Activated CD4-positive, alpha-beta T cell treated with anti-CD3 and anti-CD28 coated beads for 36 hours (primary cell): ENCODE measurements at regions of chr22 and their contacts with region 1.

Region 1: DNA sequence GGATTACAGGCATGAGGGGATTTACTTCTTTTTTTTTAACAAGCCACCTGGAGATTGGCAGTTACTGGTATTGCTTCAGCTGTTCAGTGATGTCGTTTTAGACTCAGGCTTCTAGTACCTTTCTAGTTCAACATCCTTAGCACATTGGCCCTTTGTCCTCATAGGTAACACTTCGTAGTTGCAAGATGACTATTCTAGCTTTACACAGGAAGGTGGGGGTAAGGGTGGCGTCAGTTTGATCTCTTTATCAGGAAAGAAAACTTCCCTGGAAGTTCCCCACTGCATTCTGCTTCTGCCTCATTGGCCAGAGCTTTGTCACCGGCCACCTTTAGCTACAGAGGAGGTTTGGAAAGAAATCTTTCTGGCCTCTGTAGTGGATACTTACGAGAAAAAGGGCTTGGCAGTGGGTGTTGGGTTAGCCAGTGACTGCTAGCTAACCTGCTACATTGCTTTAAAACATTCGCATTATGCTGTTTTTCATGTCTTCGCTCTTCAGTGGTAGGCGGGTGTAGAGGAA is 40.7 kb downstream of the SFI1 start:
- DNase-seq: peak; percentile 76
- ATAC-seq: peak; percentile 86
- H3K4me3 Mint-ChIP-seq: peak overlapping the region; percentile 37
- H3K27ac Mint-ChIP-seq: peak overlapping the region; percentile 98
- H3K4me1 Mint-ChIP-seq: peaks cover 78% of the 10 kb centered on the region
- H3K27me3 Mint-ChIP-seq: no peaks in the 10 kb centered on the region

Region 2: GRCh38 chr22:31489604-31490495 is 47.2 kb before region 1 on chr22 and contains the start of gene EIF4ENIF1:
- CTCF ChIA-PET with region 1: interaction called, 4 read pairs
- POLR2A ChIA-PET with region 1: interaction called, 3 read pairs
- intact Hi-C with region 1: loop called in 1 of 2 experiments (anchors 2 kb)
- DNase-seq: peak; percentile 92
- ATAC-seq: peak; percentile 75
- H3K4me3 Mint-ChIP-seq: peak within 1 kb of the TSS; percentile 86
- H3K27ac Mint-ChIP-seq: peak within 1 kb of the TSS; percentile 99
- H3K4me1 Mint-ChIP-seq: peaks cover 46% of the 10 kb centered on the region
- H3K27me3 Mint-ChIP-seq: no peaks in the 10 kb centered on the region
- total RNA-seq, gene EIF4ENIF1: 45.4 to 75.0 TPM

Region 3: DNA sequence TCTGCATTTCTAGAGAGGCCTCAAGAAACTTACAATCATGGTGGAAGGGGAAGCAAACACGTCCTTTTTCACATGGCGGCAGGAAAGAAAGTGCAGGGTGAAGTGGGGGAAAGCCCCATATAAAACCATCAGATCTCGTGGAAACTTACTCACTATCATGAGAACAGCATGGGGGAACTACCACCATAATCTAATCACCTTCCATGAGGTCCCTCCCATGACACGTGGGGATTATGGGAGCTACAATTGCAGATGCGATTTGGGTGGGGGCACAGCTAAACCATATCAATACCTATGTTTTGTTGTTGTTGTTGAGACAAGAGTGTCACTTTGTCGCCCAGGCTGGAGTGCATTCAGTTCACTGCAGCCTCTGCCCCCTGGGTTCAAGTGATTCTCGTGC is 10.8 kb before region 1 on chr22:
- CTCF ChIA-PET with region 1: interaction called, 8 read pairs
- POLR2A ChIA-PET with region 1: interaction called, 8 read pairs
- intact Hi-C with region 1: loop called (anchors 1 kb)
- DNase-seq: peak; percentile 69
- ATAC-seq: peak; percentile 86
- H3K4me3 Mint-ChIP-seq: no peak overlapping the region
- H3K27ac Mint-ChIP-seq: peak overlapping the region; percentile 97
- H3K4me1 Mint-ChIP-seq: peaks cover 73% of the 10 kb centered on the region
- H3K27me3 Mint-ChIP-seq: no peaks in the 10 kb centered on the region